Activated T-helper 2 cell treated with anti-CD3 and anti-CD28 coated beads, Interferon-gamma antibody, Interleukin-2, Interleukin-4, amounts not matched to agents 10 μg/mL and 5 μg/mL and 100 μg/mL, durations not matched to agents 14 hours and 24 hours and 36 hours (primary cell): ENCODE measurements at regions of chr9 and their contacts with region 1.

Region 1: DNA sequence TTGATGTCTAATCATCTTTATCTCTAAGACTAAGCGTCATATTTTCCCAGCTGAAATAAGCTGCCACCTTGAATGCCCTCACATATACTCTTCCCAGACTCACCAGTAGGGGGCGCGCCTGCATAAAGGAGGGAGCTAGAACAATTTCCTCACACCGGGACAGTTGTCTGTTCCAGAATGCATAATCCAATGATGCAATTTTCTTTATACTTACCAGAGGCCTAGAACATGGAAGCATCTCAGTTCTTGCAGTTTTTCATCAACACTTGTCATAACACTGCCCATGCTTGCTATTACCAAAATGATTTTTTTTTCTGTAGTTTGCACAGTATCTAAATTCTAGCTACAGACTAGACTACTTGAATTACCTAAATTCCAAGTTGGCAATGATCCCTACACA is 203.9 kb downstream of the FRMD3 start:
- DNase-seq: peak; percentile 55
- H3K4me3 Mint-ChIP-seq: no peak overlapping the region
- H3K27ac Mint-ChIP-seq: no peak overlapping the region
- H3K4me1 Mint-ChIP-seq: peaks cover 11% of the 10 kb centered on the region
- H3K27me3 Mint-ChIP-seq: no peaks in the 10 kb centered on the region

Region 2: DNA sequence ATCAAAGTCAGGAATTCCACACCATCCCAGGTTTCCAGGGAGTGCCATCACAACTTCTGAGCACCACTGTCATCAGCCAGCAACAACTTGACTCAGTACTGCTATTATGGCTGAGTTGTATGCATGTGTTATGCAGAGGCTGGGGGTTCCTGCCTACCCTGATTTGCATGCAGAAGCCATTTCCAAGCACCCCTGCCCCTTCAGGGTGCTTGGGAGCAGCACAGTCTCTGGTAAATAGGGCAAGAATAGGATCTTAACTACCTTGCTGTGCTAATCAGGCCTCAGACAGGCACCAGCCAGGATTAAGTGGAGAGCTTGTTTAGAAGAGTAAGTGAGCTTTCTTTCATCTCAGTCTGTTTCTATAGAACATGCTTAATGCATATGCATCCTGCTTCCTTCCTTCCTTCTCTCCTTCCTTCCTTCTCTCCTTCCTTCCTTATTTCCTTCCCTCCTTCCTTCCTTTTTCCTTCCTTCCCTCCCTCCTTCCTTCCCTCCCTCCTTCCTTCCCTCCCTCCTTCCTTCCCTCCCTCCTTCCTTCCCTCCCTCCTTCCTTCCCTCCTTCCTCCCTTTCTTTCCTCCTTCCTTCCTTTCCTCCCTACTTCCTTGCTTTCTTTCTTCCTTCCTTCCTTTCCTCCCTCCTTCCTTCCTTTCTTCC is 28.1 kb after region 1 on chr9:
- intact Hi-C with region 1: no loop called
- DNase-seq: no peak
- H3K4me3 Mint-ChIP-seq: no peak overlapping the region
- H3K27ac Mint-ChIP-seq: no peak overlapping the region
- H3K4me1 Mint-ChIP-seq: no peaks in the 10 kb centered on the region
- H3K27me3 Mint-ChIP-seq: no peaks in the 10 kb centered on the region

Region 3: GRCh38 chr9:83473488-83473971 is 139.2 kb after region 1 on chr9:
- intact Hi-C with region 1: loop called (anchors 5 kb)
- DNase-seq: no peak
- H3K4me3 Mint-ChIP-seq: peak overlapping the region; percentile 65
- H3K27ac Mint-ChIP-seq: peak overlapping the region; percentile 71
- H3K4me1 Mint-ChIP-seq: peaks cover 24% of the 10 kb centered on the region
- H3K27me3 Mint-ChIP-seq: peaks cover 24% of the 10 kb centered on the region

Region 4: GRCh38 chr9:83544002-83544698 is 209.8 kb after region 1 on chr9:
- intact Hi-C with region 1: loop called (anchors 1 kb)
- DNase-seq: no peak
- H3K4me3 Mint-ChIP-seq: no peak overlapping the region
- H3K27ac Mint-ChIP-seq: no peak overlapping the region
- H3K4me1 Mint-ChIP-seq: no peaks in the 10 kb centered on the region
- H3K27me3 Mint-ChIP-seq: peaks cover 19% of the 10 kb centered on the region

Region 5: GRCh38 chr9:83596896-83597504 is 262.7 kb after region 1 on chr9:
- intact Hi-C with region 1: loop called (anchors 1 kb)
- DNase-seq: peak; percentile 20
- H3K4me3 Mint-ChIP-seq: no peak overlapping the region
- H3K27ac Mint-ChIP-seq: no peak overlapping the region
- H3K4me1 Mint-ChIP-seq: no peaks in the 10 kb centered on the region
- H3K27me3 Mint-ChIP-seq: no peaks in the 10 kb centered on the region

Region 6: DNA sequence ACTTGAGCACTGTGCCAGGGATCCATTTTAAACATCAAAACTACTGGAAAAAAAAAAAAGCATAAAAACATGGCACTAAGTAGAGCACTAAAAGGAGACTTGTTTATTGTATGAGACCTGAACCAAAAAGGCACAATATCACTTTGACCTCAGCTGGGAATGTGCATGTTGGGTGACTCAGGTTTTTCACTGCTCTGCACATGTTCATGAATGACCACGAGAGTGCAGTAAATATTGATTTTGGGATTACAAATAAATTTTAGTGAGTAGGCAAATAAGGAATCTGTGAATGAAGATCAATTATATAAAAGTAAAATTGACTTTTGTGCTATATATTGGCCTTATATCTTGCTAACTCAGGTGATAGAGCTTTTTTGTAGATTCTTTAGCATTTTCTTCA is 658.1 kb after region 1 on chr9:
- intact Hi-C with region 1: no loop called
- DNase-seq: no peak
- H3K4me3 Mint-ChIP-seq: no peak overlapping the region
- H3K27ac Mint-ChIP-seq: no peak overlapping the region
- H3K4me1 Mint-ChIP-seq: peaks cover 34% of the 10 kb centered on the region
- H3K27me3 Mint-ChIP-seq: no peaks in the 10 kb centered on the region